ENCODE measurements at regions of chr2 and their contacts with region 1.

Region 1: GRCh38 chr2:27638037-27638637 is 9.3 kb downstream of the GPN1 start:
- DNase-seq: no peak
- H3K4me3 Mint-ChIP-seq: peak overlapping the region; percentile 66
- H3K27ac Mint-ChIP-seq: peak overlapping the region; percentile 91
- H3K4me1 Mint-ChIP-seq: peaks cover 19% of the 10 kb centered on the region
- H3K27me3 Mint-ChIP-seq: no peaks in the 10 kb centered on the region

Region 2: GRCh38 chr2:27428978-27429541 is 209.1 kb before region 1 on chr2:
- intact Hi-C with region 1: no loop called
- DNase-seq: peak; percentile 76
- H3K4me3 Mint-ChIP-seq: peak overlapping the region; percentile 97
- H3K27ac Mint-ChIP-seq: peak overlapping the region; percentile 97
- H3K4me1 Mint-ChIP-seq: peaks cover 43% of the 10 kb centered on the region
- H3K27me3 Mint-ChIP-seq: no peaks in the 10 kb centered on the region

Region 3: DNA sequence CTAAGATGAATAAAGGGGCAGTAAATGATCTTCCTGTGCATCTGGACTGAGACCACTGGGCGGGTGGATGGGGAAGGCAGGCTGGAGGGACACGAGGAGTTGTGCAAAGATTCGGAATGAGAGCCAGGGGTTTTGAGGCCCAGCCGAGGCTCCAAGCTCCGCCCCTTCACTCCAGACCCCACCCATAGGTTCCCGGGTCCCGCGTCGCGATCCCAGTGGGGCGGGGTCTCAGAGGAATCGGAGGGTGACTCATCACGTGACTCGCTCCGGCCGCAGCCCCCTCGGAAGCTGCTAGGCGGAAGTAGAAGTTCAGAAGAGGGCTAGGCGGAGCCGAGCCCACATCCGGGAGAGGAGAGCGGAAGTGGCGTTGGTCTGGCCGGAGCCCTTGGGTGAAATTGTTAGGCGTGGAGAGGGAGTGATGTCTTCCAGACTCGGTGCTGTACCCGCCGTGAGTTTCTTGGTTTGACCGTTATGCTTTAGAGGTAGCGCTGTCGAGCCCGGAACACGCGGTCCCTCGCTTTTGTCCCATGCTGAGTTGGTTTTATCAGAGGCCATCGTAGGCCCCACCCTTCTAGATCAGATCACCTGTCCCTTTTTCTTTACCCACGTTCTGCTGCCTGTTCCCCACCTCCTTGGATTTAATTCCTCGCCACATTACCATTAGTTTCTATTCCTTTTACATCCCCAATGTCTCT is 55.3 kb before region 1 on chr2 and contains the start of gene ZNF512:
- intact Hi-C with region 1: loop called (anchors 2 kb)
- DNase-seq: peak; percentile 75
- H3K4me3 Mint-ChIP-seq: peak within 1 kb of the TSS; percentile 86
- H3K27ac Mint-ChIP-seq: peak within 1 kb of the TSS; percentile 79
- H3K4me1 Mint-ChIP-seq: peaks cover 45% of the 10 kb centered on the region
- H3K27me3 Mint-ChIP-seq: peaks cover 7% of the 10 kb centered on the region
- total RNA-seq, gene ZNF512: 24.6 and 25.0 TPM in 2 replicates

Region 4: DNA sequence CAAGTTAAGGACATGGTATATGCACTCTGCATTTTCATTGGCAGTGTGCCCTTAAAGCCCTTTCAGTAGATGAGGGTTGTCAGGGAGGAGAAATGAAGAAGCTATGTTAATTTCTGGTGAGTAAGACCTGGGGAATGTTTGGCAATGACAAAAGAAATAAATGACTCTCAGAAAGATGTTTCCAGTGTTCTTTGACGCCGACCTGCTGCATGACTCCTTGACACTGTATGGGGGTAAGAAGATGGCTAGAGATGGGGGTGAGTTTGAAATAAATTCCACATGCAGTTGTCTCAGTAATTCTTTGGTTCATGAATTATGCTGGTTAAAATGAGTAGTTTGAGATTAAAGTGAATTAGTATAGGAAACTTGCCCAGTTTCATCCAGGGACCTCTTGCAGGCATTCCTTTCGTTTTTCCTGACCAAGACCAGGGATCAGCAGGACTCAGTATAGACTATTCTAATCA is 15.2 kb before region 1 on chr2:
- intact Hi-C with region 1: no loop called
- DNase-seq: no peak
- H3K4me3 Mint-ChIP-seq: no peak overlapping the region
- H3K27ac Mint-ChIP-seq: no peak overlapping the region
- H3K4me1 Mint-ChIP-seq: no peaks in the 10 kb centered on the region
- H3K27me3 Mint-ChIP-seq: no peaks in the 10 kb centered on the region

Region 5: DNA sequence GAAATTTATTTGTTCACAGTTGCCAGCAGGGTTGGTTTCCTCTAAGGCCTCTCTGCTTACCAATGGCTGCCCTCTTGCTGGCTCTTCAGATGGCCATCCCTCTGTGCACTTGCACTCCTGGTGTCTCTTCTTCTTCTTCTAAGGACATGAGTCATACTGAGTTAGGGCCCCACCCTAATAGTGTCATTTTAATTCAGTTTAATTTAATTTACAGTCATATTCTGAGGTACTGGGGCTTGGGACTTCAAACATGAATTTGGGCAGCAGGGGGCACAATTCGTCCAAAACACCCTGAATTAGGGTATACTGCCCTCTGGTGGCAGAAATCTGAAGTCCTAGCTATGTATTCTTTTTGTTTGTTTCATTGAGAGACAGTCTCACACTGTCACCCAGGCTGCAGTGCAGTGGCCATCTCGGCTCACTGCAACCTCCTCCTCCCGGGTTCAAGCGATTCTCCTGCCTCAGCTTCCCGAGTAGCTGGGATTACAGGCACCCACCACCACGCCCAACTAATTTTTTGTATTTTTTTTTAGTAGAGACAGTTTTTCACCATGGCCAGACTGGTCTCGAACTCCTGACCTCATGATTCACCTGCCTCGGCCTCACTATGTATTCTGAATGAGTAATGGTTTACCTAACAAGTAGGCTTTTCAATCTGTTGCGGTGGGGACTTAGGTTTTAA is 45.4 kb after region 1 on chr2:
- intact Hi-C with region 1: loop called (anchors 1 kb)
- DNase-seq: peak; percentile 80
- H3K4me3 Mint-ChIP-seq: no peak overlapping the region
- H3K27ac Mint-ChIP-seq: peak overlapping the region; percentile 74
- H3K4me1 Mint-ChIP-seq: peaks cover 32% of the 10 kb centered on the region
- H3K27me3 Mint-ChIP-seq: no peaks in the 10 kb centered on the region

Measured in activated T-helper 1 cell treated with anti-CD3 and anti-CD28 coated beads, Interleukin-12 subunit alpha, Interleukin-12 subunit beta, Interleukin-2, Interleukin-4 antibody, amounts not matched to agents 30 ng/mL and 10 ng/mL and 1 ng/mL, durations not matched to agents 14 hours and 24 hours and 36 hours (primary cell).